Left ventricle myocardium superior (tissue), 1 donor: ENCODE measurements at regions of chr20 and their contacts with region 1.

Region 1: GRCh38 chr20:20083807-20084206 is 31.5 kb downstream of the CFAP61 start:
- DNase-seq: no peak
- ATAC-seq: peak; percentile 23

Region 2: DNA sequence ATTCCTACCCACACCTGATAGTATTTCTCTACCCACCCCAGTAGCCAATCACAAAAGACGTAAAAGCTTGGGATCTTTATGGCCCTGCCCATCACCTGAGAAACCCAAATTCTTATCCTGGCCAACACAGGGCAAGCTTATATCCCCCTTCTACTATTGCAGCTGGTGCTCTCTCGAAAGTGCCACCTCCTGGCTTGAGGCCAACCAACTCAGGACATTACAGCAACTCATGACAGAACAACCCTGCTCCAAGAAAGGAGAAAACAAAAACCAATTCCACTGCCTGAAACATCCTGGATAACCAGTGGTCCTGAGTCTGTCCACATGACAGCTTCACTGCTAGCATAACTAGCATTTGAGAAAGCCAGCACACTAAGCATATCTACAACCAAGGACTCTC is 66.4 kb after region 1 on chr20:
- intact Hi-C with region 1: no loop called
- DNase-seq: no peak
- ATAC-seq: peak; percentile 43

Region 3: DNA sequence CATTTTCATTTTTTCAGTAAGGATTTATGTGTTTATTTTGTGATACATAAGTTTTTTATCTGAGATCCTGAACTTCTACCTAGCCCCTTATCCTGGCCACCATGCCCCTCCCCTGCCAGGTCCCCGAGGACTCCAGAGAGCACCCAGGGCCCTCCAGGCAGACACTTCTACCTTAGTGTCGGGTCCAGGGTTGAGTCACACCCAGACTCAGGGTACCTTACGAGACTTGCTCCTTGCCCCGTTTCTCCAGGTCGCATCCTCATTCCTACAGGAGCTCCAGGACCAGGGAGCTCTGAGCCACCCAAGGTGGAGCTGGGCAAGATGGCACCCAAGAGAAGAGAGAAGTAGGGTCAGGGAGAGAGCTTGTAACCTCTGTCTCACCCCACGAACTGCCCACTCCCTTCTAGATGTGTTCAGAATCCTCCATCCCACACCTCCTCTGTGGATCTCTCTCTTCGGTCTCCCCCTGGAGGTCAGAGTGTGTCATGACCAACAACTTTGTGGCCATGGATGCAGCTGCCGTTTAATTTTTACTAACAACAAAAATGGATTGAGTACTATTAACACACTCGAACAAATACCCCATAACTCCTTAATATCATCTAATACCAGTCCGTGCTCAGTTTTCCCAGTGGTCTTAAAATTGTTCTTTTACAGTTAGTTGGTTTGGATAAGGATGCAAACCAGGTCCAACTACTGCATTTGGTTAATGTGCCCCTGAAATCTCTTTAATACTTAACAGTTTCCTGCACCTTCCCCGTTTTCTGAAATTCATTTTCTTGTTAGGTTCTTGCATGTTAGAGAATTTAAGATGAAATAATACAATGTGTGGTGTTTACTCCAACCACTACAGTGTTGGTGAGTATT is 153.5 kb after region 1 on chr20:
- intact Hi-C with region 1: loop called (anchors 5 kb)
- DNase-seq: no peak
- ATAC-seq: peak; percentile 71

Region 4: DNA sequence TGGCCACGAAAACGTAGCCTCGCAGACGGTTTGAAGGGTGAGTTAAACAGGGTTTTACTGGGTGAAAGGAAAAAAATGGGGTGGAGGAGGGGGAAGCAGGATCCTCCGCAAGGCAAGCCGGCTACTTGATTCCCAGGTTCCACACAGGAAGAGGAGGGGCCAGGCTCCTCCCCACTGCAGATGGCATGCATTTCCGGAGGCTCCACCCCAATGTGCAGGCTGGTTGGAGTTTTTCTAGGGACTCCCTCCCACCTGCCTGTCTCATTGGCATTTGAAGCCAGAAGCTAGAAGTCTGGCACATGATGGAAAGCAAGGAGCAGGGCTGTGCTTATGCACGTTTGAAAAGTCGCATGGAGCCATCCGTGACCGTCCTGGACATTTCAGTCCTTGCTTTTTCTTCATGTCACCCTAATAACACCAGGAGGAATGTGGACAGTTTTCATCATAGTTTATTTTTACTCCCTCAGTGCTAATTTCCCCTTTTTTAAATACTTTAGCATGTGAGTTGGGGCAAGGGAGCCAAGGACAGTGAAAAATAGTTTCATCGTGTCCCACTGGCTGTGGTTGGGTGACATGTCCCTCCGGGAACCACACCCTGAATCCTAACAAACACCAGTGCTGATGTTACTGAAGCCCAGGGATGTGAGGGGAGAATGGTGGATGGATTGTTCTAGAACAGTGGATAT is 184.0 kb after region 1 on chr20:
- intact Hi-C with region 1: no loop called
- DNase-seq: no peak
- ATAC-seq: peak; percentile 54

Region 5: GRCh38 chr20:20568604-20569205 is 484.9 kb after region 1 on chr20:
- intact Hi-C with region 1: loop called (anchors 10 kb)
- DNase-seq: peak; percentile 28
- ATAC-seq: peak; percentile 35